B cell (primary cell): ENCODE measurements at regions of chr6 and their contacts with region 1.

Region 1: DNA sequence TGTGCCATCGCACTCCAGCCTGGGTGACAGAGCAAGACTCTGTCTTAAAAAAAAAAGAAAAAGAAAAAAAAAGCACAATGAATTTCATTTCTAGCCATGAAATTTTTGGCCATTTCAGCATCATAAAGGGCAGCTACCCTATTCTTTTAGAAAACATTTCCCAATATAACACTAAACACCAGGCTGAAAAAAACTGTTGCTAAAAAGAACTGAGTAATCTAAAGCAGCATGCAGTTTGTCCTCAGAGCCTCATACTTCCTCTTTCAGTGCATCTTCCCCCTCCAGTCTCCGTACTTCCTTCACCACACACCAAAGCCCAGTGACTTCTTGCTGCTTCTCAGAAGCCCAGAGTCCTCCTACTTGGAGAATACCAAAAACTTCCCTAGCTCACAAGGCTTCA is 5.6 kb upstream of the IFNGR1 start:
- DNase-seq: peak; percentile 80
- ATAC-seq: peak; percentile 79
- H3K4me3 ChIP-seq: peak overlapping the region in 1 of 5 experiments; percentile 8
- H3K4me3 Mint-ChIP-seq: peak overlapping the region; percentile 66
- H3K27ac ChIP-seq: peak overlapping the region; percentile 37 to 52
- H3K27ac Mint-ChIP-seq: peak overlapping the region; percentile 88
- H3K4me1 ChIP-seq: peaks cover 57 to 65% of the 10 kb centered on the region in 2 donors
- H3K4me1 Mint-ChIP-seq: peaks cover 70% of the 10 kb centered on the region
- H3K27me3 ChIP-seq: no peaks in the 10 kb centered on the region
- H3K27me3 Mint-ChIP-seq: no peaks in the 10 kb centered on the region
- CTCF ChIP-seq: no peak

Region 2: DNA sequence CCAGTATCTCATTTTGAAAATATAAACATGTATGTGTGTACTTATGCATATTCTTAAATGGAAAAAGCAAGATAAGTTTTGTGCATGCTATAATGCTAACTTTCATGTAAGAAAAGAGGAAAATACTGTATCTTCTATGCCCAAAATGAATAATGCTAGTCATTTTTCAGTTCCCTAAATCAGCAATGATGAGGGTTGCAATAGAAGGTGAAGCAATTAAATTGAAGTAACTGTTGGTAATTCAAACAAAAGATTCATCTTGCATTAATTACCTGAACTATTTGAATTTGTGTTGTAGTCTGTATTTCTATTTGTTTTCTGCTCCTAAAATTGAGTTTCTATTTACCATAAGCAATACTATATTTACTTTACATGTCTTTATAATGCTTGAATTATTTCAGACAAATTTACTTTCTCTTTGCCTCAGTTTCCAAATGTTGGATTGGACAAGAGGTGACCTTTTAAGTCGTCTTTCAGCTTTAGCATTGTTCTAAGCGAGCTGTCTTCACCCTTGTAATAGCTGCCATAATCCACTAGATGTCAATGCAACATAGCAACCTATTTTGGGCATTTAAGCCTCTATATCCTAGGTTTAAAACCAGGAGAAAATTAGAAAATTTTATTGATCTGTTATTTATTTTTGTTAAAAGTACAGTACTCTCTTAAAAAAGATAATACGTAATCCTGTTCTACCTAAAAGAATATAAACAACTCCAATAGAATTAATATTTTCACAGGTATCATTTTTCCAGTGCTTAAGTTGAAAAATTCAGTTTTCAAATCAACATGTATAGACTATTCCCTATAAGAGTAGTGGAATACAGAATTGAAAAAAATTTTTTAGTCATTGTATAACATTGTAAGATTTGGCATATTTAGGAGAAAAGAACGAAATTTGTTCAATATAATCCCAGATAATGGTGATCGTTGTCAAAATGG is 46.7 kb after region 1 on chr6:
- CTCF ChIA-PET with region 1: interaction called, 12 read pairs
- POLR2A ChIA-PET with region 1: interaction called, 5 read pairs
- intact Hi-C with region 1: no loop called
- DNase-seq: peak; percentile 63
- ATAC-seq: peak; percentile 72
- H3K4me3 ChIP-seq: no peak overlapping the region
- H3K4me3 Mint-ChIP-seq: no peak overlapping the region
- H3K27ac ChIP-seq: no peak overlapping the region
- H3K27ac Mint-ChIP-seq: no peak overlapping the region
- H3K4me1 ChIP-seq: peaks cover 5 to 14% of the 10 kb centered on the region in 2 donors
- H3K4me1 Mint-ChIP-seq: peaks cover 15% of the 10 kb centered on the region
- H3K27me3 ChIP-seq: no peaks in the 10 kb centered on the region
- H3K27me3 Mint-ChIP-seq: no peaks in the 10 kb centered on the region
- CTCF ChIP-seq: peak; percentile 93